ENCODE measurements at regions of chr1 and their contacts with region 1.

Region 1: DNA sequence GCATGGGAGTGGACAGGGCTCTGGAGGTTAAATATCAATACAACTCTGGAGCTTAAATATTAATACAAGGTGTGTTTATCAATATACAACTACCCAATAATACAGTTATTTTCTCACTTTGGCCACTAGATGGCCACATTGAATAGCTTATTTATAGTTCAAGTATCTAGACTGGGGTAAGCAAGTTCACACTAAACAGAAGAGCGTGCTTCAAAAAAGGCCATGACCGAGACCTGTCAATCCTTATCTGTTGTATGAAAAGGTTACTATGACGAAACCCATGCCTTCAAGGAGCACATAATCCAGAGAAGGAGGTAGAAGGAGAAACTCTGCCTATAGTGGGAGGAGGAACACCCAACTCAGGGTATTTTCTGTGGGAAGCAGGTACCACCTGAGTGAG is 29.1 kb downstream of the CHML start:
- DNase-seq: peak; percentile 43
- CTCF ChIP-seq: peak; percentile 54

Region 2: GRCh38 chr1:241475671-241476070 is 135.4 kb before region 1 on chr1:
- CTCF ChIA-PET with region 1: no interaction called
- POLR2A ChIA-PET with region 1: no interaction called
- DNase-seq: no peak
- CTCF ChIP-seq: no peak

Region 3: DNA sequence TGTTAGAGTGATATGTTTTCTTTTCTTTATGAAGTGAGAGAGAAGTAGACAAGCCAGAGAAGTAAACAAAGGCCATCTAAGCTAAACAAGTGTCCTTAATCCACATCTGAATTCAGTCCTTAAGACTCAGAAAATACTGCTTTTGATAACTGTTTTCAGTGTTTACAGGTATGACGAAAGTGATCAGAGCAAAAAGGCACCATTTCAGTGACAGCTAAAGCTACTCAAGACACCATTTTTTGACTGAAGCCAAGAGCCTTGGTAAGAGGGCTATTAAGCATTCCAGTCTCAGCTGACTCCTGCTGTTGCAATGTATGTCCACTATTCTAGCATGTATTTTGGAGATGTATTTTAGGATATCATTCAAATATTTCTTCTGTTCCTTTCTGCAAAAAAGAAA is 74.8 kb before region 1 on chr1:
- CTCF ChIA-PET with region 1: interaction called, 13 read pairs
- POLR2A ChIA-PET with region 1: no interaction called
- DNase-seq: no peak
- CTCF ChIP-seq: no peak

Region 4: GRCh38 chr1:241579426-241579825 is 31.6 kb before region 1 on chr1:
- CTCF ChIA-PET with region 1: interaction called, 10 read pairs
- POLR2A ChIA-PET with region 1: no interaction called
- DNase-seq: no peak
- CTCF ChIP-seq: no peak

Region 5: GRCh38 chr1:241600496-241600901 is 10.6 kb before region 1 on chr1:
- CTCF ChIA-PET with region 1: interaction called, 28 read pairs
- POLR2A ChIA-PET with region 1: no interaction called
- DNase-seq: peak; percentile 31
- CTCF ChIP-seq: no peak

Region 6: GRCh38 chr1:241640029-241640818 is 29.2 kb after region 1 on chr1 and contains the starts of genes CHML and OPN3:
- CTCF ChIA-PET with region 1: interaction called, 22 read pairs
- POLR2A ChIA-PET with region 1: no interaction called
- DNase-seq: peak; percentile 97
- CTCF ChIP-seq: no peak

Region 7: DNA sequence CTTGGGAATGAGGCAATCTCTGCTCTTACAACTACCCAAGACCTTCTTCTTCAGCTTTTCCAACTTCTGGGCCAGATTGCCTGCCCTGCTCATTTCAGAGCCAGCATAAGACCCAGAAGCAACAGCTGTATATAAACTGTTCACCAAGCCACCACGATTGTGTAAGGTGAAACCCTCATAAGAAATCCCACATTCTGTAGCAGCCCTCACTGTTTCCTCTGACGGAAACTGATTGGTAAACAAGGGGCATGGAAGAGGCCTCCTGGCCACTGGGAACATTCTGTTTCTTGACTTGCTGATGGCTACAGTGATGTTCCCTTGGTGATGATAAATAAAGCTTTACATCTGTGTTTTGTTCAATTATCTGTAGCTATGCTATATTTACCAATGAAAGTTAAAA is 197.2 kb after region 1 on chr1:
- CTCF ChIA-PET with region 1: no interaction called
- POLR2A ChIA-PET with region 1: no interaction called
- DNase-seq: no peak
- CTCF ChIP-seq: no peak